Heart left ventricle (tissue), 16 donors: ENCODE measurements at regions of chr2 and their contacts with region 1.

Region 1: GRCh38 chr2:26144953-26145680 is 27.8 kb upstream of the GAREM2 start:
- DNase-seq: peak in 4 of 5 donors; percentile 41 to 58 (median 42)
- ATAC-seq: peak; percentile 56 to 82 (median 70)
- H3K4me3 ChIP-seq: peak overlapping the region in 1 of 12 donors; percentile 21
- H3K27ac ChIP-seq: no peak overlapping the region
- H3K4me1 ChIP-seq: peaks cover 0 to 11% (median 0%) of the 10 kb centered on the region in 12 donors
- H3K27me3 ChIP-seq: peaks cover 0 to 4% (median 0%) of the 10 kb centered on the region in 9 donors
- CTCF ChIP-seq: peak; percentile 55 to 85 (median 75)
- POLR2A ChIP-seq: no peak

Region 2: DNA sequence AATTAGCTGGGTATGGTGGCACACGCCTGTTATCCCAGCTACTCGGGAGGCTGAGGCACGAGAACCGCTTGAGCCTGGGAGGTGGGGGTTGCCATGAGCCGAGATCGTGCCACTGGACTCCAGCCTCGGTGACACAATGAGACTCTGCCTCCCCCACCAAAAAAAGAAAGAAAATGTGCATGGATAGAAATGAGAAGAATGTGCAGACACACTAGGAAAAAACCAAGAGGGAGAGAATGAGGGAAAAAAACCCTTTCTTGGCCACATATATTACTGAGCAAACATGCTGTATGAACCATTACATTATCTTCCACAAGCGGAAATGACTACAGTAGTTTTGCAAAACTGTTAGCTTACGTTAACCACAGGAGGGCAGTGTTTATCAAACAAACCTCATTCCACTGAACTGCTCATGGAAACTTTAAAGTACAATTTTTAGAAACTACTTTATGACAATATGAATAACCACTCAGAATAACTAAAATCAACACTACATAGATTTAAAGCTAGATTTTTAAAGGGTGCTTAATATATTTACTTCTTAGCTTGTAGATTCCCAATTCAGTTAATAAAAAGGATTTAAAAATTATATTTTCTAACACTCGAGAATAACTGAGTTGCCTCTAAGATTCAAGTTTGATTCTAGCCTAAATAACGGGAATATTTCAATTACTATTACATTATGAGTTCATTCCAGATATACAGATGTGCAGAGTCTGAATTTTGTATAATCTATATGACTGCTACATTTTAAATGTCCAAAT is 293.2 kb before region 1 on chr2:
- intact Hi-C with region 1: loop called in 3 of 10 experiments (anchors 5 to 10 kb)
- DNase-seq: no peak
- ATAC-seq: peak; percentile 73 to 93 (median 92)
- H3K4me3 ChIP-seq: peak overlapping the region in 1 of 12 donors; percentile 30
- H3K27ac ChIP-seq: peak overlapping the region in 1 of 12 donors; percentile 38
- H3K4me1 ChIP-seq: peaks cover 0 to 45% (median 8%) of the 10 kb centered on the region in 12 donors
- H3K27me3 ChIP-seq: no peaks in the 10 kb centered on the region
- CTCF ChIP-seq: peak; percentile 53 to 84 (median 74)
- POLR2A ChIP-seq: no peak

Region 3: DNA sequence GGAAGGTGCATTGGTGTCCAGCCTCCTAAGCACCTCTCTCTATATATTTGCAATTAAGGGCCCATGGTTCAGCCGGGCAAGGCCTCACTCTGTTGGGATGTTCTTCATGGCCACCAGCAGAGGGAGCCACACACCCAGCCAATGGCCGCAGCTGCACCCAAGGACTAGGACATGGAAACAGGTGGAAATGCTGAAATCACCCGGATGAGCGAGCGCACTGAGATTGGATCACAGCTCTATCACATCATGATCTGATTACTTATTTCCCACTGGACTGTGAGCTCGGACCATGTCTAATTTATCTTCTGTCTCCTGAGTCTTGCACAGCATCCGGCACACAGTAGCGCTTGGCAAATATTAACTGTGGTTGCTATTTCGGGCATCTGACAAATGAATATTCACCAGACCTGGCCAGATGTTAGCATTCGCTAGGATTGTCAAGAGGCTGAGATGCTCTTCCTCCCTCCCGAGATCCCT is 194.0 kb before region 1 on chr2:
- intact Hi-C with region 1: loop called (anchors 2 to 5 kb)
- DNase-seq: peak; percentile 74 to 86 (median 80)
- ATAC-seq: peak; percentile 86 to 97 (median 95)
- H3K4me3 ChIP-seq: peak overlapping the region in 1 of 12 donors; percentile 26
- H3K27ac ChIP-seq: no peak overlapping the region
- H3K4me1 ChIP-seq: peaks cover 0 to 10% (median 0%) of the 10 kb centered on the region in 12 donors
- H3K27me3 ChIP-seq: no peaks in the 10 kb centered on the region
- CTCF ChIP-seq: peak; percentile 82 to 97 (median 94)
- POLR2A ChIP-seq: no peak

Region 4: GRCh38 chr2:25991965-25992364 is 153.2 kb before region 1 on chr2:
- intact Hi-C with region 1: loop called (anchors 1 to 5 kb)
- DNase-seq: no peak
- ATAC-seq: peak in 3 of 4 donors; percentile 22 to 26 (median 24)
- H3K4me3 ChIP-seq: peak overlapping the region in 1 of 12 donors; percentile 38
- H3K27ac ChIP-seq: no peak overlapping the region
- H3K4me1 ChIP-seq: peaks cover 0 to 12% (median 3%) of the 10 kb centered on the region in 12 donors
- H3K27me3 ChIP-seq: no peaks in the 10 kb centered on the region
- CTCF ChIP-seq: no peak
- POLR2A ChIP-seq: no peak

Region 5: GRCh38 chr2:26033818-26034636 is 111.1 kb before region 1 on chr2 and contains the start of gene RAB10:
- intact Hi-C with region 1: no loop called
- DNase-seq: peak; percentile 99 to 100 (median 99)
- ATAC-seq: peak; percentile 96 to 97 (median 96)
- H3K4me3 ChIP-seq: peak within 1 kb of the TSS; percentile 63 to 96 (median 88)
- H3K27ac ChIP-seq: peak within 1 kb of the TSS; percentile 88 to 99 (median 96)
- H3K4me1 ChIP-seq: peaks cover 0 to 45% (median 29%) of the 10 kb centered on the region in 12 donors
- H3K27me3 ChIP-seq: no peaks in the 10 kb centered on the region
- CTCF ChIP-seq: peak in 4 of 12 donors; percentile 23 to 37 (median 30)
- POLR2A ChIP-seq: peak; percentile 63 to 91
- total RNA-seq, gene RAB10: 71.7 to 121 (median 99.7) TPM

Region 6: GRCh38 chr2:26080356-26080755 is 64.8 kb before region 1 on chr2:
- intact Hi-C with region 1: loop called in 5 of 10 experiments (anchors 5 kb)
- DNase-seq: no peak
- ATAC-seq: no peak
- H3K4me3 ChIP-seq: no peak overlapping the region
- H3K27ac ChIP-seq: no peak overlapping the region
- H3K4me1 ChIP-seq: peaks cover 0 to 21% (median under 1%) of the 10 kb centered on the region in 12 donors
- H3K27me3 ChIP-seq: no peaks in the 10 kb centered on the region
- CTCF ChIP-seq: no peak
- POLR2A ChIP-seq: no peak

Region 7: GRCh38 chr2:26088032-26088643 is 57.0 kb before region 1 on chr2:
- intact Hi-C with region 1: loop called (anchors 2 to 5 kb)
- DNase-seq: no peak
- ATAC-seq: peak in 2 of 4 donors; percentile 66 to 74
- H3K4me3 ChIP-seq: no peak overlapping the region
- H3K27ac ChIP-seq: no peak overlapping the region
- H3K4me1 ChIP-seq: peaks cover 0 to 50% (median 4%) of the 10 kb centered on the region in 12 donors
- H3K27me3 ChIP-seq: no peaks in the 10 kb centered on the region
- CTCF ChIP-seq: peak; percentile 50 to 79 (median 68)
- POLR2A ChIP-seq: no peak

Region 8: GRCh38 chr2:27024188-27024587 is 879.1 kb after region 1 on chr2:
- intact Hi-C with region 1: no loop called
- DNase-seq: no peak
- ATAC-seq: no peak
- H3K4me3 ChIP-seq: no peak overlapping the region
- H3K27ac ChIP-seq: no peak overlapping the region
- H3K4me1 ChIP-seq: peaks cover 0 to 24% (median 11%) of the 10 kb centered on the region in 12 donors
- H3K27me3 ChIP-seq: no peaks in the 10 kb centered on the region
- CTCF ChIP-seq: no peak
- POLR2A ChIP-seq: no peak